CD4-positive, alpha-beta T cell (primary cell): ENCODE measurements at regions of chr11 and their contacts with region 1.

Region 1: GRCh38 chr11:63986156-63986931 is at the start of gene OTUB1:
- DNase-seq: peak; percentile 72 to 93 (median 83)
- ATAC-seq: peak; percentile 89
- H3K4me3 ChIP-seq: peak within 1 kb of the TSS; percentile 80
- H3K4me3 Mint-ChIP-seq: peak within 1 kb of the TSS; percentile 96
- H3K27ac ChIP-seq: peak within 1 kb of the TSS; percentile 68 to 89
- H3K27ac Mint-ChIP-seq: peak within 1 kb of the TSS; percentile 96
- H3K4me1 ChIP-seq: peaks cover 29% of the 10 kb centered on the region
- H3K4me1 Mint-ChIP-seq: peaks cover 27% of the 10 kb centered on the region
- H3K27me3 ChIP-seq: no peaks in the 10 kb centered on the region
- H3K27me3 Mint-ChIP-seq: no peaks in the 10 kb centered on the region
- CTCF ChIP-seq: no peak
- total RNA-seq, gene OTUB1: 57.5 to 60.0 TPM

Region 2: DNA sequence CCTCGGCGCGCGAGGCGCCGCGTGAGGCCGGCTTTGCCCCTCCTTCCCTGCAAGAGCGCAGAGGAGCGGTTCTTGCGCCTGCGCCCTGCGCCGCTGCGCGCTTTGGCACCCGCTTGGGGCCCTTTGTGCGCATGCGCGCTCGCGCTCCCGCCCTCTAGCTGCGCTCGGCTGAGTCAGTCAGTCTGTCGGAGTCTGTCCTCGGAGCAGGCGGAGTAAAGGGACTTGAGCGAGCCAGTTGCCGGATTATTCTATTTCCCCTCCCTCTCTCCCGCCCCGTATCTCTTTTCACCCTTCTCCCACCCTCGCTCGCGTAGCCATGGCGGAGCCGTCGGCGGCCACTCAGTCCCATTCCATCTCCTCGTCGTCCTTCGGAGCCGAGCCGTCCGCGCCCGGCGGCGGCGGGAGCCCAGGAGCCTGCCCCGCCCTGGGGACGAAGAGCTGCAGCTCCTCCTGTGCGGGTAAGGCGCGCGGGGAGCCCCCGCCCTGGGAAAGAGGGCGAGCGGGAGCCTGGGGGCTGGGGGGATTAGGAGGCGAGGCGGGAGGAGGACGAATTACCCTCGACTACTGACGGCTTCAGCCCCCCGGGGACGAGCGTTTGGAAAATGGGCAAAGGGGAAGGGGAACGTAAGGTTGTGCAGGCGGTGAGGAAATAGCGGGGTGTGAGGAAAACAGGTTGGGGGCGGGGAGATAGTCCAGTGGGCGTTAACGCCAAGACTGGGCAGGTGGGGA is 304.9 kb before region 1 on chr11 and contains the start of gene RTN3:
- CTCF ChIA-PET with region 1: no interaction called
- POLR2A ChIA-PET with region 1: no interaction called
- intact Hi-C with region 1: no loop called
- DNase-seq: peak; percentile 94 to 100 (median 98)
- ATAC-seq: peak; percentile 90
- H3K4me3 ChIP-seq: peak within 1 kb of the TSS; percentile 94
- H3K4me3 Mint-ChIP-seq: peak within 1 kb of the TSS; percentile 85
- H3K27ac ChIP-seq: peak within 1 kb of the TSS; percentile 62 to 92
- H3K27ac Mint-ChIP-seq: peak within 1 kb of the TSS; percentile 59
- H3K4me1 ChIP-seq: peaks cover 18% of the 10 kb centered on the region
- H3K4me1 Mint-ChIP-seq: peaks cover 31% of the 10 kb centered on the region
- H3K27me3 ChIP-seq: no peaks in the 10 kb centered on the region
- H3K27me3 Mint-ChIP-seq: no peaks in the 10 kb centered on the region
- CTCF ChIP-seq: no peak
- total RNA-seq, gene RTN3: 16.4 to 17.6 TPM

Region 3: GRCh38 chr11:63974259-63975143 is 11.8 kb before region 1 on chr11 and contains the start of gene COX8A:
- CTCF ChIA-PET with region 1: no interaction called
- POLR2A ChIA-PET with region 1: interaction called, 15 read pairs
- intact Hi-C with region 1: loop called (anchors 1 kb)
- DNase-seq: peak; percentile 85 to 99 (median 90)
- ATAC-seq: peak; percentile 99
- H3K4me3 ChIP-seq: peak within 1 kb of the TSS; percentile 94
- H3K4me3 Mint-ChIP-seq: peak within 1 kb of the TSS; percentile 100
- H3K27ac ChIP-seq: peak within 1 kb of the TSS; percentile 90 to 95
- H3K27ac Mint-ChIP-seq: peak within 1 kb of the TSS; percentile 99
- H3K4me1 ChIP-seq: peaks cover 27% of the 10 kb centered on the region
- H3K4me1 Mint-ChIP-seq: peaks cover 25% of the 10 kb centered on the region
- H3K27me3 ChIP-seq: peaks cover 0 to 4% of the 10 kb centered on the region in 2 experiments
- H3K27me3 Mint-ChIP-seq: no peaks in the 10 kb centered on the region
- CTCF ChIP-seq: no peak
- total RNA-seq, gene COX8A: 89.1 to 105 TPM

Region 4: DNA sequence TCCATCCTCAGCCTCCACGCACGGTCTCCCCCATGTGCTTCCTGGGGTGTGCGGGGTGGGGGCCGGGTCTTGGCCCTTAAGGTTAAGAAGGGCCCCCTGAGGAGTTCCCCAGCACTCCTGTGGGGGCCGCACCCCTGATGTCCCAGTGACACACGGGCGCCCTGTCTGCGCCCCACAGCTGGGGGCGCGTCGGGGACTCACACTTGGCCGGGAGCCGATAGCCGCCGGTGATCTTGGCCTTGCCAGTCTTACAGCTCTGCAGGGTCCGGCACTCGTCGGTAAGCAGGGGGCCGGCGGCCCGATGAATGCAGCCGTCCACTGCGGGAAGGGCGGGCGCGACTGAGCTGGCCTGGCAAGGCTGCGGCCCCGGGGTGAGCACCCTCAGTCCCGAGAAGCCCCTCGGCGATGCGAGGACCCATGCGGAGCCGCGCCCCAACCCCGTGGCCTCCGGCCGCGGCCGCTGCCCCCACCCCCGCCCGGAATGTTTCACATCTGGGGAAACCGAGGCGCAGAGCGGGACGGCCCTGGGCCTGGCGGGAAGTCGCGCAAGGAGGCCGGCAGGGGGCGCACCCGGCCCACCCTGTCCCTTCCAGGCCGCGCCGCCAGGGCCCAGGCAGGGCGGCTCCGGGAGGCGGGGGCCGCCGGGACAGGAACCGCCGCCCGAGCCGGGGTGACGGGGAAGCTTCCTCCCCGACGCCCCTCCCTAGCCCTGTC is 13.8 kb after region 1 on chr11:
- CTCF ChIA-PET with region 1: interaction called, 13 read pairs
- POLR2A ChIA-PET with region 1: interaction called, 13 read pairs
- intact Hi-C with region 1: no loop called
- DNase-seq: peak; percentile 53 to 91 (median 70)
- ATAC-seq: peak; percentile 76
- H3K4me3 ChIP-seq: peak overlapping the region; percentile 41
- H3K4me3 Mint-ChIP-seq: peak overlapping the region; percentile 11
- H3K27ac ChIP-seq: no peak overlapping the region
- H3K27ac Mint-ChIP-seq: no peak overlapping the region
- H3K4me1 ChIP-seq: peaks cover 28% of the 10 kb centered on the region
- H3K4me1 Mint-ChIP-seq: peaks cover 9% of the 10 kb centered on the region
- H3K27me3 ChIP-seq: peaks cover 0 to 3% of the 10 kb centered on the region in 2 experiments
- H3K27me3 Mint-ChIP-seq: no peaks in the 10 kb centered on the region
- CTCF ChIP-seq: peak; percentile 75